ENCODE measurements at regions of chr2 and their contacts with region 1.

Region 1: DNA sequence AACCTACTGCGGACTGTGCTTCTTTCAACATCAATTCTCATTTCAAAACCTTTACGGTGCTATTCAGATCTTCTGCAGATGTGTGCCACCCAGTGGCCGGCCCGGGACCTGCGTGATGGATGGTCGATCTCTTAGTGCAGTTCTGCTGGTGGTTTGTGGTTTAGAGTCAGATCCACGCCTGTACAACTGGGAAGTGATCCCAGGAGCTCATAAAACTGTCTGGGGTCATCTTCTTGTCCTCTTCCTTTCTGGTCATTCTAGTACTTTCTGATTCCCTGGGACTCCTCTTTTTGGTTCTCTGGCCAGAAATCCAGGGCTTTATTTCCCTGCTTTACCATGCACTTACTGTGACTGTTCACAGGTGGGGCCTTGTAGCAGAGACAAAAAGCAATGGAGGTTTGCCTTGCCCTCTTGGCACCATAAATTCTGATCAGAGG is 15.8 kb upstream of the SELENOI start:
- DNase-seq: peak; percentile 81
- CTCF ChIP-seq: peak; percentile 93

Region 2: DNA sequence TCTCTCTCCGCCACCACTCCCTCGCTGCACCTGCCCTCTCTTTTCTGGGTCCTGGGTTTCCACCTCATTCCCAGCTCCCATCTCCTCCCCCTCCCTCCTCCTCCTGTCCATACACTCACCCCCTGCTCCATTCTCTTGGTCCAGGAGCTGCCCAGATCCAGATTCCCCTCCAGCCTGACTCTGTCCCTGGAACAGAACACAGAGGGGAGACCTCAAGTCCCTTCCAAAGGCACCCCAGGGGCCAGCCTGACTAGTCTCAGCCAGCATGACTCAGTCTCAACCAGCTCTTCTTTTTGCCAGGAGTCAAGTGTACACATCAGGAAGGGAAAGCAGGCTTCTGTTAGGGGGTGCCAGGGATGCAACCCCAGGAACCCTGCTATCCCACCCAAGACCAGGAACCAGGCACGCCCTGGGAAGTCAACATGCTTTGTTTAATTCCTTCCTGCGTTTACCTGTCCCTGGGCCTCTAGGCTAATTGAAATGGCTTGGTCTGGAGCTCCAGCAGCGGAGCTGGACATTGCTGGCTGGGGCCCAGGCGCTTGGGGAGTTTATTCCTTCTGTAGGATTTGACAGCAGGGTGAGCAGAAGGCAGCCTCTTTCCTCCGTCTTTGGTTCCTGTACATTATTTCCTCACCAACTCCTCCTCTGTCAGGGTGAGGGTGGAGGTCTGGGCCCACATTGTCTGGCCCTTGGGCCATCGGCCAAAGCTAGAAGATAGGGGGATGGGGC is 12.6 kb before region 1 on chr2:
- CTCF ChIA-PET with region 1: interaction called, 24 read pairs
- POLR2A ChIA-PET with region 1: no interaction called
- DNase-seq: no peak
- CTCF ChIP-seq: no peak

Region 3: GRCh38 chr2:26345545-26346453 is 15.7 kb after region 1 on chr2 and contains the start of gene SELENOI:
- CTCF ChIA-PET with region 1: interaction called, 13 read pairs
- POLR2A ChIA-PET with region 1: no interaction called
- DNase-seq: peak; percentile 98
- CTCF ChIP-seq: no peak

Measured in GM10248 (cell line).